ENCODE measurements at regions of chrX and their contacts with region 1.

Region 1: DNA sequence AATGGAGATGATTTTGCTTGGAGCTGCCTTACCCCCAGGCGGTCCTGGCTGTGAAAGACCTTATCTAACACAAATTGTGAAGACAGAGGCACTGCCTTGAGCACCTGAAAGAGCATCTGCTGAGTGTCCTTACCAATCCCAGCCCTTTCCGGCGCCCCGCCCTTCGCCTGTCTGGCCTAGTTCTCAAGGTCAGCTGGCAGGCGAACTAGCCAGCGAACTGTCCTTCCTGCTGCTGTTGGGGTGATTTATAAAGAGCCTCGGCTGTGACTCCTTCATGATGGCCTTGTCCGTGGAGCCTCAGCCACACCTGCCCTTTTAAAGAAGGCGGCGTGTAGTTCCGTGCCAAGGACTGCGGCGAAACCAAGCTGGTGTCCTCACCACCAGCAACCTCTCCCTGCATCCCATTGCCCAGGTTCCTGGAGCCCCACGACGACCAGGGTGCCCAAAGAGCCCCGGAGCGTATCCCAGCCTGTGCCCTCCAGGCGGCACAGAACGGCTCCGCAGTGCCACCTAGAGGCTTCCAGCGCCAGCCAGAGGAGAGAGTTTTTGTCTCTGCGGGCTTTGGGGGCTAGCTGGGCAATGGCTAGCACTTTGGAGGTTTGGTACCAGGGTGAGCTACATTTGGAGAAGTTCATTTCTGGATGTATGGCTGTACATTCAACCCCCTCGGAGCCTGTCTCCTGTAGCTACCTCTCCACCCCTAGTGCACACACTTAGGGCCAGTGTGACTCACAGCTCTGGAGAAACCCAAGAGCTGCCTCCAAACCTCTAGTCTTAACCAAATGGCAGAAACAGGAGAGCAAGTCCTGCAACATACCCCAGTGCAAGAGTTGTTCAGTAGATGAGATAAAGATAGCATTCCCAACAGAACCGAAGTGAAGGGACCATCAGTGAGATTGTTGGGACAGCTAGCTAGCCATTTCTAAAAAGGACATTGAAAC is 36.8 kb upstream of the VMA21 start:
- DNase-seq: peak; percentile 68
- ATAC-seq: peak; percentile 84
- H3K4me3 Mint-ChIP-seq: peak overlapping the region; percentile 57
- H3K27ac Mint-ChIP-seq: no peak overlapping the region
- H3K4me1 Mint-ChIP-seq: peaks cover 18% of the 10 kb centered on the region
- H3K27me3 Mint-ChIP-seq: no peaks in the 10 kb centered on the region
- CTCF ChIP-seq: peak; percentile 40

Region 2: DNA sequence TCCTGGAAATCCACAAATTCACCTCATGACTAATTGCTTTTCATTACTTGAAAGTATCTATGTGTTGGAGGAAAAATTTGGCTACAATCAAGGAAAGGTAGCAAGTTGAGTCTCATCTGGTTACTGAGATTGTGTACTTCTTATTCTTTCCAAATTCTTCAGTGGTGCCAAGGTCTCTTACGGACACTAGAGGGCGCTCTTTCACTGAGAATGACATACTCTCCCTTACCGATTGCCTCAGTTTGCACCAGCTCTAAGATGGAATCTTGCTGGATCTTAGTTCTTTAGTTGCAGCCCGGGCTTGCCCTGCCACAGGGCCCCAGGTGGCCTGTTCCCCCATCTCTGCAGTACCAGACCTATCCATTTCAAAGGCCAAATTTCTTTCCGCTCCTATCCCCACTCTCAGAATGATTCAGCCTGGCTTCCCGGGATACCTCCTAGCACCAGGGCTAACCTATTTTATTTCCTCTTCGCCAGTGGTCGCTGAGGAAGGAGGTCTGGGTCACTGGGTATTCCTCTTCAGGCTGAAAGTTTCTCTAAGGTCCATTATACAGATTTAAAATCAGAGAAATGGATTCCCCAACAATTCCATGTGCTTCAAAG is 208.4 kb before region 1 on chrX:
- CTCF ChIA-PET with region 1: interaction called, 11 read pairs
- POLR2A ChIA-PET with region 1: no interaction called
- DNase-seq: peak; percentile 10
- ATAC-seq: peak; percentile 75
- H3K4me3 Mint-ChIP-seq: no peak overlapping the region
- H3K27ac Mint-ChIP-seq: no peak overlapping the region
- H3K4me1 Mint-ChIP-seq: peaks cover 24% of the 10 kb centered on the region
- H3K27me3 Mint-ChIP-seq: peaks cover 53% of the 10 kb centered on the region
- CTCF ChIP-seq: peak; percentile 66

Region 3: DNA sequence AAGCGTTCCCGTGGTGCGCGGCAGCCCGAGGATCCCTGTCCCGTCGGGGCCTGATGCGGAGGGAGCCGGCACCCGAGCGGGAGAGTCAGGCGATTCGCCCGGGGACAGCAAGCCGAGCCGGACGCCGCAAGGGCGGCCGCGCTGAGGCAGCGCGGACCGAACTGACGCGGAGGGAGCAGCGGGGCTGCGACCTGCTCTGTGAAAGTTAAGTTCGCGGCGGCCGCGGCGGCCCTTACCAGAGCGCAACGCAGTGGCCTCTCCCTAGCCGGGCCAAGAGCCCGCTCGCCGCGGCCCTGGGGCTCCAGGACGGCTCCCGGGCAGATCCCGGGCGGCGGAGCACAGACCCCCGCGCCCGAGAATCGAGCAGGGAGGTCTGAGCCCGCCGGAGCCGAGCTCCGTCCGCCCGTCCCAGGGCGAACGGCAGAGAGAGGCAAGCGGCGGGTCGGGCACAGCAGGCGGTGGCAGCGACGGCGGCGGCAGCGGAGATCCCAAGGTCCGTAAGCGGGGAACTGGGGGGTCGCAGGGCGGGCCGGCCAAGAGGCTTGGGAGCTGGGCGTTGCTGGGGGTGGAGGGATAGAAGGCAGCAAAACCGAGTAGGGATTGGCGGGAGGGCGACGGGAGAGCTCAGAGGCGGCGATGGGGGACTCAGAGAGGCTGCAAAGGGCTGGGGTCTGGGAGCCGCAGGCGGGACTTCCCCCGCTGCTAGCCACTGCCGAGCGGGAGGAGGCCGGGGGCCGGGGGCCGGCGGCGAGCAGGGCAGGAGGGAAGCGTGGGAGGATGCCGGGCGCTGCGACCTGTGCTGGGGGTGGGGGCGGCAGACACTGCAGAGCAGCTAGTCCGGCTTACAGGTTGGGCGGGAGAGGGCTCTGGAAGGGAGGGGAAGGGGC is 182.8 kb before region 1 on chrX:
- CTCF ChIA-PET with region 1: interaction called, 56 read pairs
- POLR2A ChIA-PET with region 1: interaction called, 6 read pairs
- DNase-seq: peak; percentile 54
- ATAC-seq: peak; percentile 56
- H3K4me3 Mint-ChIP-seq: peak overlapping the region; percentile 83
- H3K27ac Mint-ChIP-seq: no peak overlapping the region
- H3K4me1 Mint-ChIP-seq: peaks cover 22% of the 10 kb centered on the region
- H3K27me3 Mint-ChIP-seq: peaks cover 81% of the 10 kb centered on the region
- CTCF ChIP-seq: no peak

Region 4: DNA sequence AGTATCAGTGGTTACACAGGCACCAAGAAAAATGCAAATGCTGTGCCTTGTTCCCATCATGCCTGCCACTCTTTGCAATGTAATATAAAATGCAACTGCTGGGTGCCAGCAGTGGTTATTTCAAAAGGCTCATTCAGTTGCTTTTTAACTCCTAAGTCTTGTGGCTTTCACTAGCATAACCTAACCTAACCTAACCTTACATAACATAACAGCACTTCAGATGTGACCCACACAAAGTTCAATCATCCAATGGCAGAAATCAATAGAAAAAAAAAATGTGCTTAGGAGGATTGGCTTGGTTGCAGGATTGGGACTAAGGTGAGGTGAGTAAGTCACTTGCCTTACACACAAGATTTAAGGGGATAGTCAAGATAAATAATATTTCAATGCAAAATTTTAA is 23.4 kb before region 1 on chrX:
- CTCF ChIA-PET with region 1: no interaction called
- POLR2A ChIA-PET with region 1: no interaction called
- DNase-seq: no peak
- ATAC-seq: no peak
- H3K4me3 Mint-ChIP-seq: no peak overlapping the region
- H3K27ac Mint-ChIP-seq: no peak overlapping the region
- H3K4me1 Mint-ChIP-seq: no peaks in the 10 kb centered on the region
- H3K27me3 Mint-ChIP-seq: peaks cover 4% of the 10 kb centered on the region; the same call in 1 of the 2 replicates
- CTCF ChIP-seq: no peak

Measured in WTC11 (cell line).